ENCODE measurements at regions of chr14 and their contacts with region 1.

Region 1: DNA sequence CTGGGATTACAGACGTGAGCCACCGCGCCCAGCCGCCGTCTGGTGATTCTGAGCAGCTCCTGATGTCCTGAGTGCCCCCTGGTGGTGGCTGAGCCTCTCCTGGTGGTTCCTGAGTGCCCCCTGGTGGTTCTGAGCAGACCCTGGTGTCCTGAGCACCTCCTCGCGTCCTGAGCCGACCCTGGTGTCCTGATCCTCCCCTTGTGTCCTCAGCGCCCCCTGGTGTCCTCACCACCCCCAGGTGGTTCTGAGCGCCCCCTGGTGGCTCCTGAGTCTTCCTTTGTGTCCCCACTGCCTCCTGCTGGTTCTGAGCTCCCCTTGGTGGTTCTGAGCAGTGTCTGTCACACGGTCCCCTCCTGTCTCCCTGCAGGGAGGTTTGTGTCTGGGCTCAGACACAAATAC is 1304.9 kb downstream of the TMEM121 start:
- DNase-seq: peak; percentile 75
- H3K4me3 Mint-ChIP-seq: no peak overlapping the region
- H3K27ac Mint-ChIP-seq: no peak overlapping the region
- H3K4me1 Mint-ChIP-seq: no peaks in the 10 kb centered on the region
- H3K27me3 Mint-ChIP-seq: no peaks in the 10 kb centered on the region

Region 2: GRCh38 chr14:105939810-105940508 is 891.4 kb before region 1 on chr14:
- CTCF ChIA-PET with region 1: no interaction called
- intact Hi-C with region 1: no loop called
- DNase-seq: no peak
- H3K4me3 Mint-ChIP-seq: no peak overlapping the region
- H3K27ac Mint-ChIP-seq: no peak overlapping the region
- H3K4me1 Mint-ChIP-seq: peaks cover 3% of the 10 kb centered on the region
- H3K27me3 Mint-ChIP-seq: peaks cover 6% of the 10 kb centered on the region

Region 3: DNA sequence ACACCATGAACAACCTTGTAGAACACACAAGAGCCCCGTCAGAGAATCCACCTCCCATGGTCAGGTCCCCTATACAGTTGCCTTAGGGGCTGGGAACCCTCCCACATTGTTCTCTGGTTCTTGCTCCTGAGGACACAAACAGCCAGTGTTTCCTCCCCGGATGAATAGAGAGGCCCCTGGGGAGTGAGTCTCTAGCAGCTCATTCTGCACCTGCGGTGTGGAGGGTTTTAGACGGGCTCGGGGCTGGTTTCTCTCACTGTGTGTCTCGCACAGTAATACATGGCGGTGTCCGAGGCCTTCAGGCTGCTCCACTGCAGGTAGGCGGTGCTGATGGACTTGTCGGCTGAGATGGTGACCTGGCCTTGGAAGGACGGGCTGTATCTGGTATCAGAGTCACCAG is 252.8 kb before region 1 on chr14:
- CTCF ChIA-PET with region 1: no interaction called
- intact Hi-C with region 1: no loop called
- DNase-seq: no peak
- H3K4me3 Mint-ChIP-seq: no peak overlapping the region
- H3K27ac Mint-ChIP-seq: no peak overlapping the region
- H3K4me1 Mint-ChIP-seq: no peaks in the 10 kb centered on the region
- H3K27me3 Mint-ChIP-seq: no peaks in the 10 kb centered on the region

Region 4: DNA sequence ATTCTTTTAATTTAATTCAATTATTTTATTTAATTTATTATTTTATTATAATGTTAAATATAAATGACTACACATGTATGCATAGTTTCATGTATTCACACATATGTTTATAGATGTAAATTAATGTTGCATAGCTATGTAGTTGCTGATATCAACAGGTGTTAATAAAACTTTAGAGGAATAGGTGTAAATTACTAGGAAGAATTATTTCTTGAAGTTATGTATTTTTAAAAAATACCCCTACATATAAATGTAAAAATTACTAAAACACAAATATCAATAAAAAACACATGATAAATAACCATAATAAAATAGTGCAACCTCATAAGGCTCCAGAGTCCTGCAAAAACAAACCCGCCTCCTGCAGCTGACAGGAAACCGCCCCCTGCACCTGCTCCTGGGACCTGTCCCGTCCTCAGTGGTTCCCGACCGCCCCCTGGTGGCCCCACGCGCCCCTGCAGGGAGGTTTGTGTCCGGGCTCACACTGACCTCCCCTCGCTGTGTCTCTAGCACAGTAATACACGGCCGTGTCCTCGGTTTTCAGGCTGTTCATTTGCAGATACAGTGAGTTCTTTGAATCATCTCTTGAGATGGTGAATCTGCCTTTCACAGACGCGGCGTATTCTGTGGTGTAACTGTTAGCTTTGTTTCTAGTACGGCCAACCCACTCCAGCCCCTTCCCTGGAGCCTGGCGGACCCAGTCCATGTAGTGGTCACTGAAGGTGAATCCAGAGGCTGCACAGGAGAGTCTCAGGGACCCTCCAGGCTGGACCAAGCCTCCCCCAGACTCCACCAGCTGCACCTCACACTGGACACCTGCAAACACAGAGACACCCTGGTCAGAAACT is 40.9 kb before region 1 on chr14:
- CTCF ChIA-PET with region 1: interaction called, 15 read pairs
- intact Hi-C with region 1: no loop called
- DNase-seq: peak; percentile 89
- H3K4me3 Mint-ChIP-seq: no peak overlapping the region
- H3K27ac Mint-ChIP-seq: no peak overlapping the region
- H3K4me1 Mint-ChIP-seq: peaks cover 10% of the 10 kb centered on the region
- H3K27me3 Mint-ChIP-seq: peaks cover 4% of the 10 kb centered on the region

Region 5: GRCh38 chr14:106802423-106803364 is 28.6 kb before region 1 on chr14:
- CTCF ChIA-PET with region 1: interaction called, 17 read pairs
- intact Hi-C with region 1: no loop called
- DNase-seq: no peak
- H3K4me3 Mint-ChIP-seq: no peak overlapping the region
- H3K27ac Mint-ChIP-seq: no peak overlapping the region
- H3K4me1 Mint-ChIP-seq: no peaks in the 10 kb centered on the region
- H3K27me3 Mint-ChIP-seq: peaks cover 25% of the 10 kb centered on the region

Region 6: DNA sequence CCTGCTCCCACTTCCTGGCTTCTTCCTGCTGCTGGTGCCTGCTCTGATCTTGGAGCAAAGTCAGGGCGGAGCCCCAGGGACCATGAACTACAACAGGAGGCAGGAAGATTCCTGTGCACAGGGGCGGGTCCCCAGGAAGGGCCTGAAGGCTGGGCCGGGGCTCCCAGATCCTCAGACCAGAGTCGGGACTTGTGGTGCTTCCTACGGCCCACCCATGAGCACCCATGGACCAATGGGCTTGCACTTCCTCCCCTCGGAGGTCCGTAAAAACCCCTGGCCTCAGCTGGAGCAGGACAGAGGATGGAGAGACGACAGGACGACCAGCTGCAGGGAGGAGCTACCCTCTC is 17.9 kb before region 1 on chr14:
- CTCF ChIA-PET with region 1: interaction called, 14 read pairs
- intact Hi-C with region 1: no loop called
- DNase-seq: no peak
- H3K4me3 Mint-ChIP-seq: no peak overlapping the region
- H3K27ac Mint-ChIP-seq: no peak overlapping the region
- H3K4me1 Mint-ChIP-seq: peaks cover 9% of the 10 kb centered on the region
- H3K27me3 Mint-ChIP-seq: peaks cover under 1% of the 10 kb centered on the region

Region 7: GRCh38 chr14:106844608-106845285 is 13.4 kb after region 1 on chr14:
- CTCF ChIA-PET with region 1: interaction called, 85 read pairs
- intact Hi-C with region 1: loop called (anchors 2 kb)
- DNase-seq: peak; percentile 72
- H3K4me3 Mint-ChIP-seq: peak overlapping the region; percentile 86
- H3K27ac Mint-ChIP-seq: peak overlapping the region; percentile 76
- H3K4me1 Mint-ChIP-seq: peaks cover 26% of the 10 kb centered on the region
- H3K27me3 Mint-ChIP-seq: no peaks in the 10 kb centered on the region